Posterior vena cava (tissue), 2 donors: ENCODE measurements at regions of chr5 and their contacts with region 1.

Region 1: DNA sequence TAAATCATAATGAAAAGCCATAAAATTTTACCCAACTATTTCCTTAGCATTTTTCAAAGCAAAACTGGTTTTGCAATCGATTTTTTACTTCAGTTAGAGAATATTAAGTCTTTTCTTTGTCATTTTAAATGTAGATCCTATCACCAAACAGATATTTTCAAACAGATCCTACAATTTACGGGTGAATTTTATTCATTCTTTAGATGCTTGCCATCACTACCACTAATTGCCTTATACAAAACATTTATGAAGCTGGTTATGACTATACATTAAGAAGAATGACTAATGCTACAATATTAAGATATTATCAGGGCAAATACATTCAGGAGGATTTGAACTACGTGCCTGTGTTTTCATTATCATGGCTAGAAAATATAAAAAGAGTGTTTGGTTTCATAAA is 196.9 kb downstream of the CWC27 start:
- DNase-seq: no peak

Region 2: GRCh38 chr5:65102828-65103711 is 137.5 kb after region 1 on chr5:
- intact Hi-C with region 1: loop called in 1 of 2 experiments (anchors 10 kb)
- DNase-seq: peak; percentile 85

Region 3: DNA sequence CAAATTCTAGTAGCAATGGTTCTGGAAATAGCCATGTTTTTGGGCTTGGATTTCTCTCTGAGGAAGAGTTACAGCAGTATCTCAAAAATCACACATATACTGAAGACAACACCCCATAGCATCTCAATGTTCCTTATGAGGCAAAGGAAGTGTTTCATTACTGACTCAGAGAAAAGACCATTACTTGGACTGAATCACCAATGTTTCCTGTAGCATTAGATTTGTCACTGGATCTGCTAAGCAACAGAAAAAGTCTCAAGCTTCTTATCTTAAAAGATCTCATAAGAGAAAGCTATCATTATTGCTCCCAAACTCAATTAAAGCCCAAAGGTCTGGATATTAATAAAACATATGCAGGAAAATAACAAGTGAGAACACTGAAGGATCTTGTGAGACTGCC is 243.7 kb after region 1 on chr5:
- intact Hi-C with region 1: loop called in 1 of 2 experiments (anchors 10 kb)
- DNase-seq: no peak